Natural killer cell (primary cell): ENCODE measurements at regions of chr12 and their contacts with region 1.

Region 1: GRCh38 chr12:53047221-53048042 is 2.4 kb upstream of the TNS2 start:
- DNase-seq: peak; percentile 76 to 87
- ATAC-seq: peak; percentile 85 to 91 (median 88)
- H3K4me3 ChIP-seq: peak overlapping the region; percentile 83
- H3K4me3 Mint-ChIP-seq: peak overlapping the region; percentile 74
- H3K27ac ChIP-seq: peak overlapping the region; percentile 66
- H3K27ac Mint-ChIP-seq: peak overlapping the region in 1 of 2 donors; percentile 86
- H3K4me1 ChIP-seq: peaks cover 18% of the 10 kb centered on the region
- H3K4me1 Mint-ChIP-seq: peaks cover 9 to 17% of the 10 kb centered on the region in 2 donors
- H3K27me3 ChIP-seq: no peaks in the 10 kb centered on the region
- H3K27me3 Mint-ChIP-seq: peaks cover 0 to 4% of the 10 kb centered on the region in 2 donors
- CTCF ChIP-seq: peak; percentile 36

Region 2: DNA sequence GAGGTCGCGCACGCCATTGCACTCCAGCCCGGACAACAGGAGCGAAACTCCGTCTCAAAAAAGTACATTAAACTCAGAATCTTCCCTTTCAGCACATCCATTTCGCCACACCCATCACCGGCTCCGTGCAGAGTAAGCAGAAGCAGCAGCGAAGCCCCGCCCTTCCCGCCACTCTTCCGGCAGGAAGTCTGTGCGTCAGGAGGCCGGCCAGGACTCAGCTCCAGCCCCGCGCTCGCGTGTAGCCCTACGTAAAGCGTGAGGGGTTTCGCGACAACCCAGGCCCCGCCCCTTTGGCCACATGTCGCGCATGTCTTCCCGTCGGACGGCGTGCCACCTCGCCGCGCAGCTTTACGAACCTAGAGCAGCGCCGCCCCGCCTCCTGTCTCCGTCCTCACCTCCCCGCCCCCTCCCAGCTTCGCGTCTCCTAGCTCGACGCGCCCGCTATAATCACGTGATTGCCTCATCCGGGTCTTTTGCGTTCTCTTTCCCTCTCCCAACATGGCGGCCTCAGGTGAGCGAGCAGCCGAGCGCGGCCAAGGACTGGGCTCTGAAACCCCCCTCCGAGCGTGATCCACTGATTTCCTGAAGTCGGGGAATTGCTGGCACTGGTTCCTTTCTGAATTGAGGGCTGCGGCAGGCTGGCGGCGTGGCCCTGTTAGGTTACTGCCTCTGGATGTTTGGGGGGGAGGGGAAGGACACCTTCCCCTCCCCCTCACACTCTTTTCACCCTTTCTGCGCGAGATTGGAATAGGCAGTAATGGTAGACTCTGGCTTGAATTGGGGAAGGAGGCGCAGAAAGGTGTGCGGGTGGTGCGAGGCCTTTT is 41.2 kb before region 1 on chr12 and contains the start of gene EIF4B:
- intact Hi-C with region 1: loop called (anchors 5 kb)
- DNase-seq: peak; percentile 97 to 100
- ATAC-seq: peak; percentile 89 to 98 (median 91)
- H3K4me3 ChIP-seq: peak within 1 kb of the TSS; percentile 100
- H3K4me3 Mint-ChIP-seq: peak within 1 kb of the TSS; percentile 97
- H3K27ac ChIP-seq: peak within 1 kb of the TSS; percentile 89
- H3K27ac Mint-ChIP-seq: peak within 1 kb of the TSS; percentile 97 to 99
- H3K4me1 ChIP-seq: peaks cover 27% of the 10 kb centered on the region
- H3K4me1 Mint-ChIP-seq: peaks cover 36% of the 10 kb centered on the region in 2 donors
- H3K27me3 ChIP-seq: no peaks in the 10 kb centered on the region
- H3K27me3 Mint-ChIP-seq: no peaks in the 10 kb centered on the region
- CTCF ChIP-seq: no peak
- total RNA-seq, gene EIF4B: 505 to 537 (median 518) TPM

Region 3: DNA sequence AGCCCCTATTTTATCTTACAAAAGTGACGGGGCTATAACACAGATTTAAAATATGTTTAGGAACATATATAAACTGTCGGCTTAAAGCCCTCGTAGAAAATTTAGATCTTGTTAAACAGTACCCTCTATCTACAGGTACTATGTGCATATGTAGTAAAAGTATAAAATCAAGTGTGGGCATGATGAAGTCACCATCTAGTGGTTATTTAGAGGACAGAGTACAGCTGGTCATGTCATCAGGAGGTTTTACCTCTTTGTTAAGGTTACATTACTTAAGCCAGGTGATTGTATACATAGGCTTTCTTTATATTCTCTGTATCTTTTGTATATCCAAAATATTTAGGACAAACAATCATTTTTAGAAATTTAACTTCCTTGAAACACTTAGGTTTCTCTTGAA is 15.8 kb before region 1 on chr12:
- intact Hi-C with region 1: no loop called
- DNase-seq: no peak
- ATAC-seq: no peak
- H3K4me3 ChIP-seq: no peak overlapping the region
- H3K4me3 Mint-ChIP-seq: no peak overlapping the region
- H3K27ac ChIP-seq: no peak overlapping the region
- H3K27ac Mint-ChIP-seq: no peak overlapping the region
- H3K4me1 ChIP-seq: no peaks in the 10 kb centered on the region
- H3K4me1 Mint-ChIP-seq: peaks cover 5 to 11% of the 10 kb centered on the region in 2 donors
- H3K27me3 ChIP-seq: no peaks in the 10 kb centered on the region
- H3K27me3 Mint-ChIP-seq: no peaks in the 10 kb centered on the region
- CTCF ChIP-seq: no peak